Breast epithelium (tissue), 4 donors: ENCODE measurements at regions of chr2 and their contacts with region 1.

Region 1: DNA sequence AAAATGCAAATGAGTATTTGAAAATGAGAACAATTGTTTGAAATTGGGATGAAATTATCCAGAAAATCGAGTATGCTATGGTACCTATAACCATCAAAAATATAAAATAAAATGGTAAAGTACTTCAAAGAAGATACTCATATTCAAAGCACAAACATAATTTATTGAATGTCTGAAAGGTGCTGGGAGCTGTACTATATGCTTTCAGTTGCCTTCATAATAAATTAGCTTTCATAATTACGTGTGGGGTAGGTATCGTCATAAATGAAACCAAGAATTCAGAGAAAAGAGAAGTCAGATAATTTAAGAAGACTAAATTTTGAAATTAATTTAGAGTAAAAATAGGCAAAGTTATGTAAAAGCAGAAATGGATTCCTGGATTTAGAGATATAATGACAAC is 721.9 kb upstream of the ACVR2A start:
- DNase-seq: no peak
- H3K4me3 ChIP-seq: no peak overlapping the region
- H3K27ac ChIP-seq: no peak overlapping the region
- H3K4me1 ChIP-seq: no peaks in the 10 kb centered on the region
- H3K27me3 ChIP-seq: no peaks in the 10 kb centered on the region
- CTCF ChIP-seq: no peak
- POLR2A ChIP-seq: no peak

Region 2: GRCh38 chr2:146754606-146755005 is 368.3 kb before region 1 on chr2:
- intact Hi-C with region 1: no loop called
- DNase-seq: no peak
- H3K4me3 ChIP-seq: no peak overlapping the region
- H3K27ac ChIP-seq: no peak overlapping the region
- H3K4me1 ChIP-seq: no peaks in the 10 kb centered on the region
- H3K27me3 ChIP-seq: no peaks in the 10 kb centered on the region
- CTCF ChIP-seq: no peak
- POLR2A ChIP-seq: no peak

Region 3: DNA sequence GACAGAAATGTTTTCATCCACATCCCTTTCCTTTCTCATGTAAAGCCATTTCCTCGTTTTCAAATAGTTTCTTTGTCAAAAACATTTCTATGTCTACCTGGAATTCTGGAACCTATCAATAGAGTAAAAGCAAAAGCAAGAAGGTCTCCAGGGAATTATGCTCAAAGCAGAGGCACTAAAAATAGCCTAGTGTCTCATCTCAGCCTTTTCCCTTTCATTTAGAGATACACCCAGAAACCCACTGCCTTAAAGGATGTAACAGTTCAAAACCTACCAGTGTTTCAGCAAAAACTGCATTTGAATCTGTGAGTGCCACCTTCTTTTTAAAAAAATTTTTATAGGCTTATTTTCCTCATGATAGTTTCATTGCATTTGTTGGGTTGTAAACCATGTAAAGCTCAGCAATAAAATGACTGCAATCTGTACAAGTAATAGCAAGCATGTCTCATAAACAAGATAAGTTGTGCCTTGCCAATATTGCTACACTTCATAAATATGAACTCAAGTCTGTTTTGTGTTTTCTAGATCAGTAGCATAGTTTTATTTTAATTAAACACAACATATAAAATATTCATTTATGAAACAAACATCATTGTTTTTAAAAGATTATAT is 205.4 kb before region 1 on chr2:
- intact Hi-C with region 1: no loop called
- DNase-seq: no peak
- H3K4me3 ChIP-seq: no peak overlapping the region
- H3K27ac ChIP-seq: peak overlapping the region in 1 of 2 donors; percentile 63
- H3K4me1 ChIP-seq: no peaks in the 10 kb centered on the region
- H3K27me3 ChIP-seq: no peaks in the 10 kb centered on the region
- CTCF ChIP-seq: no peak
- POLR2A ChIP-seq: no peak

Region 4: DNA sequence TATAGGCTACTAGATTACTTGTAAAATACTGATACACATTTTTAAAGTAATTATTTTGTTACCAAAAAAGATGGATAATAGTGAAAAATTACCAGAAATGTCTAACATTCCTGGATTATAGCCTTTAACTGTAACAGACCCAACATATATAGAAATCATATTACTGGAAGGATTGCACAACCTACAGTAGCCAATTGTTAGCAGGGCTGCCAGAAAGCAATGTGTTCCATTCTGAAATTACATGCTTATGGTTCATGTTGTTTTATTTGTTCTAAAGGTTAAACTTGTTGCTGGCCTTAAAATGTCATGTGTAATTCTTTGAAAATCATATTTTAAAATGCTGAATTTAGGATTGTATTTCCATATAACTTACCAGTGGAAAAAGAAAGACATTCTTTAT is 71.7 kb before region 1 on chr2:
- intact Hi-C with region 1: loop called (anchors 2 kb)
- DNase-seq: no peak
- H3K4me3 ChIP-seq: no peak overlapping the region
- H3K27ac ChIP-seq: no peak overlapping the region
- H3K4me1 ChIP-seq: no peaks in the 10 kb centered on the region
- H3K27me3 ChIP-seq: no peaks in the 10 kb centered on the region
- CTCF ChIP-seq: no peak
- POLR2A ChIP-seq: no peak

Region 5: DNA sequence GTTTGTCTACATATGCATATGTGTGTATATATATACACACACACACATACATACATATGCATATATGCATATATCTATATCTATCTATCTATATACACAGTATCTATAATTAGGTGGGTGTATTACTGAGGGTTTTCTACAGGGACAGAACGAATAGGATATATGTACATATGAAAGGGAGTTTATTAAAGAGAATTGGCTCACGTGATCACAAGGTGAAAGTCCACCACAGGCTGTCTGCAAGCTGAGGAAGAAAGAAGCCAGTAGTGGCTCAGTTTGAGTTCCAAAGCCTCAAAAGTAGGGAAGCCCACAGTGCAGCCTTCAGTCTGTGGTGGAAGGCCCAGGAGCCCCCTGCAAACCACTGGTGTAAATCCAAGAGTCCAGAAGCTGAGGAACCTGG is 34.1 kb before region 1 on chr2:
- intact Hi-C with region 1: loop called (anchors 2 kb)
- DNase-seq: no peak
- H3K4me3 ChIP-seq: no peak overlapping the region
- H3K27ac ChIP-seq: no peak overlapping the region
- H3K4me1 ChIP-seq: no peaks in the 10 kb centered on the region
- H3K27me3 ChIP-seq: no peaks in the 10 kb centered on the region
- CTCF ChIP-seq: no peak
- POLR2A ChIP-seq: no peak

Region 6: DNA sequence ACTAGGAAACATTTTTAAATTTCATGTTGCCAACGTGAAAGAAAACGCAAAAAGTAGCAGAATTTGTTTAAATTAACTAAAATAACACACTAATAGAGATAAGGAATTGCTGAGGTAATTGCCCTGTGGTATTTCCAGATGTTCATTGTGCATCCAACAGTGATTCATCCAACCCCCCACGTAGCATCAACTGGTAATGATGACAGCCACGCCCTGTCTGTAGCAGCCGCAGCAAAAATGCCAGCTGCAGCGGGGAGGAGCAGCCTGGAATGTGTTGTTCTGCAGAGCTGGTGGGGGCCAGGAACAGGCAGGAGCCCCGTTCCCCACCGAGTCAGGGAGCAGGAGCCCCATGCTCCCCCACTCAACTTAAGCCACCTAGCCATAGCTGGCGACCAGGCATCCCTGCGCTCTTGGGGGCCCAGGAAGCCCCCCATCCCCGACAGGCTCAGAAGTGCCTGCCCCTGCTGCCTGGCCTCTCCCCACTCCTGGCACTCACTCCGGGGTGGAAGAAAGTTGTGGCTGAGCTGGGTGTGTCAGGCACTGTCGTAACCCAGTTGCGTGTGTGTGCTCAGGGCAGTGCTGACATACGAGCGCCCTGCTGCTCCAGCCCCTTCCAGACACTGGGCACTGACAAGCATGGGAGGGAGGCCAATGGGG is 26.8 kb after region 1 on chr2:
- intact Hi-C with region 1: no loop called
- DNase-seq: no peak
- H3K4me3 ChIP-seq: no peak overlapping the region
- H3K27ac ChIP-seq: no peak overlapping the region
- H3K4me1 ChIP-seq: no peaks in the 10 kb centered on the region
- H3K27me3 ChIP-seq: no peaks in the 10 kb centered on the region
- CTCF ChIP-seq: no peak
- POLR2A ChIP-seq: no peak

Region 7: GRCh38 chr2:148527488-148528340 is 1404.8 kb after region 1 on chr2:
- intact Hi-C with region 1: loop called (anchors 5 kb)
- DNase-seq: no peak
- H3K4me3 ChIP-seq: no peak overlapping the region
- H3K27ac ChIP-seq: no peak overlapping the region
- H3K4me1 ChIP-seq: no peaks in the 10 kb centered on the region
- H3K27me3 ChIP-seq: no peaks in the 10 kb centered on the region
- CTCF ChIP-seq: no peak
- POLR2A ChIP-seq: no peak